ENCODE measurements at regions of chr2 and their contacts with region 1.

Region 1: GRCh38 chr2:178796079-178796677 is 11.0 kb downstream of the TTN start:
- DNase-seq: peak in 1 of 2 experiments; percentile 65
- H3K4me3 ChIP-seq: no peak overlapping the region
- H3K27ac ChIP-seq: no peak overlapping the region
- H3K4me1 ChIP-seq: no peaks in the 10 kb centered on the region
- H3K27me3 ChIP-seq: no peaks in the 10 kb centered on the region
- CTCF ChIP-seq: peak; percentile 97

Region 2: GRCh38 chr2:178225006-178225805 is 571.0 kb before region 1 on chr2:
- CTCF ChIA-PET with region 1: no interaction called
- POLR2A ChIA-PET with region 1: no interaction called
- intact Hi-C with region 1: no loop called
- DNase-seq: no peak
- H3K4me3 ChIP-seq: no peak overlapping the region
- H3K27ac ChIP-seq: no peak overlapping the region
- H3K4me1 ChIP-seq: no peaks in the 10 kb centered on the region
- H3K27me3 ChIP-seq: no peaks in the 10 kb centered on the region
- CTCF ChIP-seq: no peak

Region 3: GRCh38 chr2:179106676-179107428 is 310.7 kb after region 1 on chr2:
- CTCF ChIA-PET with region 1: no interaction called
- POLR2A ChIA-PET with region 1: no interaction called
- intact Hi-C with region 1: loop called (anchors 10 kb)
- DNase-seq: peak; percentile 63 to 91
- H3K4me3 ChIP-seq: no peak overlapping the region
- H3K27ac ChIP-seq: no peak overlapping the region
- H3K4me1 ChIP-seq: peaks cover 18% of the 10 kb centered on the region
- H3K27me3 ChIP-seq: no peaks in the 10 kb centered on the region
- CTCF ChIP-seq: no peak

Region 4: GRCh38 chr2:179410552-179411356 is 614.6 kb after region 1 on chr2:
- CTCF ChIA-PET with region 1: no interaction called
- POLR2A ChIA-PET with region 1: no interaction called
- intact Hi-C with region 1: loop called (anchors 10 kb)
- DNase-seq: peak; percentile 44 to 50
- H3K4me3 ChIP-seq: no peak overlapping the region
- H3K27ac ChIP-seq: no peak overlapping the region
- H3K4me1 ChIP-seq: no peaks in the 10 kb centered on the region
- H3K27me3 ChIP-seq: no peaks in the 10 kb centered on the region
- CTCF ChIP-seq: peak; percentile 82

Region 5: GRCh38 chr2:179898873-179899272 is 1102.7 kb after region 1 on chr2:
- CTCF ChIA-PET with region 1: no interaction called
- POLR2A ChIA-PET with region 1: no interaction called
- intact Hi-C with region 1: loop called (anchors 2 kb)
- DNase-seq: peak in 1 of 2 experiments; percentile 16
- H3K4me3 ChIP-seq: no peak overlapping the region
- H3K27ac ChIP-seq: no peak overlapping the region
- H3K4me1 ChIP-seq: no peaks in the 10 kb centered on the region
- H3K27me3 ChIP-seq: no peaks in the 10 kb centered on the region
- CTCF ChIP-seq: peak; percentile 66

Measured in PC-9 (cell line).